ENCODE measurements at regions of chr2 and their contacts with region 1.

Region 1: GRCh38 chr2:191020221-191020741 is 6.3 kb upstream of the STAT1 start:
- DNase-seq: peak; percentile 92 to 98
- H3K4me3 ChIP-seq: peak overlapping the region; percentile 51
- CTCF ChIP-seq: peak in 1 of 3 donors; percentile 4
- POLR2A ChIP-seq: no peak

Region 2: DNA sequence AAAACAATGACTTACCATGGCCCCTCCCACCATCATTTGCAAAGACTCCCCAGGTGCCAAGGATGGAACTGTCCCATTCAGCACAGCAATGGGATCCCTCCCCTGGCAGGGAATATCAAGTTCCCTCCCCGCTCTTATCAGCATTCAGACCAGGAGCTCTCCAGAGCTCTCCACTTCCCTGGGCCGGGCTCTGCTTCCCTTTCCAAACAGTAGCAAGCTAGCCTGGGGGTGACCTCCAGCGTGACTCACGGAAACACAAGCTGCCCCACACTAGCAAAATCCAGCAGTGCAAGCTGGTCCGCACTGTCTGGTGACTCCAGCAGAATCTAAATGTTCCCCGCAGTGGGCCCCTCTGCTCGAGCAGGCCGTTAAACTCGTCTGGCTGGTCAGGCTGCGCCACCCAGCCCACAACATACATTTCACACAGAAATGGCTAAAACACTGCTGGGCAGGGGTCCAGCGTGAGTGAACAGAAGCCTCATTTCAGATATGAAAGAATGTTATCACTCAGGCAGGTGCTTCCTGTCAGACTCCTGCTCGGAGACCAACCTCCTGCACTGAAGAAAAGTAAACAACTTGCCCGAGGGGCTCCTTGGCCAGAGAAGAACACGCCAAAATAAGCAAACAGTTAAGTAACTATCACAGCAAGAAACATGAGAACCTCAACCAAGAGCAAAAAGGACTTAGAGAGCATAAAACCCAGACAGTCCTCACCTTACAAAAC is 40.2 kb before region 1 on chr2:
- intact Hi-C with region 1: no loop called
- DNase-seq: peak in 1 of 2 donors; percentile 88
- H3K4me3 ChIP-seq: no peak overlapping the region
- CTCF ChIP-seq: no peak
- POLR2A ChIP-seq: no peak

Region 3: DNA sequence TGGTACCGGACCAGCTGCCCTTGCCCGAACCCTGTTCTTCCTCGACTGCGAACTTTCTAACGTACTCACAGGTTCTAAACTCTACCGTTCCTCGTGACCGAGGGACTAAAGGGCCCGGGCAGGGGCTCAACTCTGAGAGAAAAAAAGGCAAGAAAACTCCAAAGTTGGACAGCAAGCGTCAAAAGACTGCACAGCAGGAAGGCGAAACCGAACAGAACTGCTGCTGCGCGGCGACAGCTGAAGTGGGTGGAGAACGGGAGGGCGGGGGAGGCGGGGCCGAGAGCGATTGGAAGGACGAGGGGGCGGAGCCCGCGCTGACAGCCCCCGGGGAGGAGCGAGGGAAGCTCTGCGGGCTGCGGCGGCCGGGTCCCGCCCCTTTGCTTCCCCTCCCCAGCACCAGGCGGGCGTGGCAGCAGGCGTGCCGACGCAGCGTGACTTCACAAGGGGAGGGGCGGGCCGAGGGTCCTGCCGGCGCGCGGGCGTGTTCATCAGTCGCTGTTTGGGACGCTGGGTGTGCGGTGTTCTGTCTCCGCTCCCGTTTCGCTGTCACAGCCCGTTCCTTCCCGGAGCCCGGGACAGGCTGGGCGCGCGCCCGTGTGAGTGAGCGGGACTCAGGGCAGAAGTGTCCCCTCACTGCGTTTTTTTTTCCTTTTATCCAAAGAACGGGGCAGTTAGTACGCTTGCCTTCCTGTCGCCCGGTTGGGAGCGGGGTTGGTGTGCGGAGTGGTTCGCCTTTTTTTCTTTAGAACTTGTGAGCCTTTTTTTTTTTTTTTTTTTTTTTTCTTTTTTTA is 657.6 kb after region 1 on chr2 and contains the start of gene NABP1:
- intact Hi-C with region 1: loop called (anchors 10 kb)
- DNase-seq: peak; percentile 98 to 100
- H3K4me3 ChIP-seq: peak within 1 kb of the TSS; percentile 72
- CTCF ChIP-seq: no peak
- POLR2A ChIP-seq: peak in 1 of 2 donors; percentile 98
- total RNA-seq, gene NABP1: 6.2 to 38.0 (median 9.5) TPM

Measured in lower leg skin (tissue), 4 donors.